Right cardiac atrium (tissue), 5 donors: ENCODE measurements at regions of chr2 and their contacts with region 1.

Region 1: GRCh38 chr2:43484323-43484930 is 111.4 kb downstream of the THADA start:
- DNase-seq: no peak
- ATAC-seq: peak; percentile 68 to 71
- H3K4me3 ChIP-seq: no peak overlapping the region
- H3K27ac ChIP-seq: no peak overlapping the region
- H3K4me1 ChIP-seq: no peaks in the 10 kb centered on the region
- H3K27me3 ChIP-seq: no peaks in the 10 kb centered on the region

Region 2: GRCh38 chr2:42835577-42836371 is 648.7 kb before region 1 on chr2:
- intact Hi-C with region 1: loop called in 1 of 4 experiments (anchors 10 kb)
- DNase-seq: peak in 2 of 3 donors; percentile 30 to 61
- ATAC-seq: peak; percentile 55 to 92
- H3K4me3 ChIP-seq: no peak overlapping the region
- H3K27ac ChIP-seq: peak overlapping the region; percentile 80
- H3K4me1 ChIP-seq: peaks cover 9% of the 10 kb centered on the region
- H3K27me3 ChIP-seq: no peaks in the 10 kb centered on the region

Region 3: DNA sequence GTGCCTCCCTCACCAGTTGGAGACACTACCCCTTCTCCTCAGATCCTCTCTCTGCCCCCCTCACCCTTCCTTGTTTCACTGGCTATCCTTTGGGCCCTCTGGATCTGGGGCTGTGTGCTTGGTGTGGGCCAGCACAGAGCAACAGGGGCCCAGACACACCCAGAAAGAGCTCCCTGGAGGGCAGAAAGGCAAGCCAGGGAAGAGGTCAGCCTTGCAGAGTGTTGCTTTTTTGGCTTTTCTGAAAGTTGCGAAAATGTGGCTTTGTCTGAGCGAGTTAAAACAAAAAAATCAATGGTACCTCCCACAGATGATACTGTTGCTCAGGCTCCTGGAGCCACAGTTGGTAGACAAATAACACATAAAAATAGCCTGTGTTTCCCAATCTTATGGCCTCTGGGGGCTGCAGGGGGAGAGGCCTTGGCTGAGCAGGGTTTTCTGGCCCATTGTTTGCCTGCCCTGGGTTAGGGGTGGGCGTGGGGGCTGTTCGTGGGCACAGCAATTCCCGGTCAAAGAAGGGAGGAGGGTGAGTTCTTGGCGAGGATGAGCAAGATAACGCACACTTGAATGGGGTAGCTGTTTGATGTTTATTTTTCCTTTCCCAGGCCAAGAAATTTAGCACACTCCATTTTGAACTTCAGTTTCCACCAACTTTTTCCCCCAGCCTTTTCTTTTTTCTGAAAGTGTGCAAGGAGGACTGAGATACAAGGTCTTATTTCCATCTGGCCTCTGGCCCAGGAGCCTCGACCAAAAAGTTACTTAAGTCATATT is 525.0 kb before region 1 on chr2:
- intact Hi-C with region 1: loop called in 1 of 4 experiments (anchors 10 kb)
- DNase-seq: peak; percentile 79 to 92 (median 89)
- ATAC-seq: peak; percentile 85
- H3K4me3 ChIP-seq: no peak overlapping the region
- H3K27ac ChIP-seq: peak overlapping the region; percentile 90
- H3K4me1 ChIP-seq: peaks cover 27% of the 10 kb centered on the region
- H3K27me3 ChIP-seq: no peaks in the 10 kb centered on the region

Region 4: DNA sequence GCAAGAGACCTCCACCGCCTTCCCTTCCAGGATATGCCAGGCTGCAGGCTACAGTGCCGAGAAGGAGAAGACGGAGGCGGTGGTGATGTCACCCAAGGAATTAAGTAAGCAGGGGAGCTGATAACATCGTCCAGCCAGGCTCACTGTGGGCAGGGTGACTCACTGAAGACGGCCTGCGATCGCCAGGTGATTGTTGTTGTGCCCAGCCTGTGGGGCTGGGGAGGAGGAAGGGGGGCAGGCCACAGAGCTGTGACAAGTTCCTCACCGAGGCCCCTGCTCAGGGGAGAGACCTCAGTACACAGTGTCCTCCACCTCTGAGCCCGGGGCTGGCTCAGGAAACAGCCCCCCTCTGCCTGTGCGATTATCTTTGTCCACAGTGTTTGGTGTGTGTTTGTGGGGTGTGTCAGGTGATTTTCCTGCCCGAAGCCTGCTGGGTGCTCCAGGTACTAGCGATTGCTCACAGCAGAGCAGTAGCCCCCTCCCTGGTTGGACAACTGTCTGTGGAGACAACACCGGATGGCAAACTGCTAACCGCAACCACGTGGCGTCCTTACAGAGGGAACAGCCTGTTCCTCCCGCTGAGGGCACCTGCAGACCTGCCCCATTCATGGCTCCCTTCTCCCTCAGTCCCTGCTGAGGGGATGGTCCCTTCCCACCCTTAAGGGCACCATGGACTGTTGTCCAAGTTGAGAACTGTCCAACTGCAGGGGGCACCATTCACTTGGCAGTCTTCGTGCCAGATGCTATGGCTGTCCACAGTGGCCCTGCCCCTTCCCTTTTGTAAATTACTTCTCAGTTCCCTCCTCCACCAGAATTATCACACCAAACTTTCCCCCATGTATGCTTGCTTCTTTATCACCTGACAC is 353.2 kb before region 1 on chr2:
- intact Hi-C with region 1: loop called in 3 of 4 experiments (anchors 10 kb)
- DNase-seq: peak; percentile 63 to 87 (median 78)
- ATAC-seq: peak; percentile 42 to 58
- H3K4me3 ChIP-seq: no peak overlapping the region
- H3K27ac ChIP-seq: peak overlapping the region; percentile 3
- H3K4me1 ChIP-seq: peaks cover 14% of the 10 kb centered on the region
- H3K27me3 ChIP-seq: no peaks in the 10 kb centered on the region

Region 5: GRCh38 chr2:43251171-43251731 is 233.2 kb before region 1 on chr2:
- intact Hi-C with region 1: no loop called
- DNase-seq: no peak
- ATAC-seq: peak; percentile 65 to 76
- H3K4me3 ChIP-seq: no peak overlapping the region
- H3K27ac ChIP-seq: peak overlapping the region; percentile 91
- H3K4me1 ChIP-seq: peaks cover 8% of the 10 kb centered on the region
- H3K27me3 ChIP-seq: no peaks in the 10 kb centered on the region

Region 6: DNA sequence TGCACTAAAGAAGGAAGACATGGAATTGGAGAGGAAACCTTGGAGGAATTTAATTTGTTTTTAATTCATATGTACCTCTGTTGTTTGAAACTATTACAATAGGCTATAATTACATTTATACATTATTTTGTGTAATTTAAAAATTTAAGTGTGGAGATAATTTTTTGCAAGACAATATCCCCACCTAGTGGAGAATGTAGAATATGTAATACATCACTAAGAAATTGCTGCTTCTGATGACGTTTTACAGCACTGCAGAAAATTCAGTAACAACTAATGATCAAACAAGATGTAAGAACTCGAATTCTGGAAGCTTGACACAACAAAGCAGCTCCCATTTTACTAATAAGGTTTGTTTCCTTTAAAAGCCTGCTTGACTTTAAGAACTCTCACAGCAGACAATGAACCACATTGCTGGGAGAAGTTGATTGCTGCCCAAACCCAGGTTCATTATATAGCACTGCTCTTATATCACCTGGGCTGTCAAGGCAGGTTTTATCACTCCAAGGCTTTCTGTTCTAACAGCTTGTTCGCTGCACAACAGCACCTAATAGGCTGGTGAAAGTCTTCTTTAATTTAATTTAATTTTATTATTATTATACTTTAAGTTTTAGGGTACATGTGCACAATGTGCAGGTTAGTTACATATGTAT is 58.0 kb after region 1 on chr2:
- intact Hi-C with region 1: loop called in 1 of 4 experiments (anchors 5 kb)
- DNase-seq: no peak
- ATAC-seq: peak; percentile 23 to 27
- H3K4me3 ChIP-seq: no peak overlapping the region
- H3K27ac ChIP-seq: no peak overlapping the region
- H3K4me1 ChIP-seq: no peaks in the 10 kb centered on the region
- H3K27me3 ChIP-seq: no peaks in the 10 kb centered on the region